MCF 10A (cell line): ENCODE measurements at regions of chr4 and their contacts with region 1.

Region 1: DNA sequence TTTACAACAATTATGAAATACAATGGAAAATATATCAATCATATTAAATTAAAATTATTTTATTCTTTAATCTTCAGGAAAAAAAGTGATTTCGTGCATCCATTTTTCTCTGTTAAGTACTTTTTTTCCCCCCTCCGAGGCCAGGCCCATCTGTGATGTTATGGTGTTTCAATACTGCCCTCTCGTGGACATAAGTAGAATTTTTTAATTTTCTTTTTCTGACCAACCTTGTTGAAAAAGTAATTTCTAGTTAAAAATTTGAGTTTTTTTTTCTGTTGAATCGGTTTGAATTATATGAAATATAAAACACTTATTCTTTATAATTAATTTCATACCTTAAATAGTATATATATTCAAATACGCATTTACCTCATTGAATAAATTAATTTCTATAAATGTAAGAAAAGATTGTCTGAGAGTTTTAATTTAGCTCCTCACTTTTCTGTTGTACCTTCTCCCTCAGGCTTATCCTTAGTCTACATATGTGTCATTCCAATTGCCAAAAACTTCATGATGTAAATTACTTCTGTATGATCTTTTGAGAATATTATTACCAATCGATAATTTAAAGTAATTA is 175.8 kb upstream of the TECRL start:
- DNase-seq: peak; percentile 55
- H3K4me3 Mint-ChIP-seq: no peak overlapping the region
- H3K27ac Mint-ChIP-seq: no peak overlapping the region
- H3K4me1 Mint-ChIP-seq: peaks cover 9% of the 10 kb centered on the region
- H3K27me3 Mint-ChIP-seq: no peaks in the 10 kb centered on the region
- CTCF ChIP-seq: peak; percentile 63

Region 2: GRCh38 chr4:63528256-63528991 is 1056.6 kb before region 1 on chr4:
- CTCF ChIA-PET with region 1: interaction called, 3 read pairs
- POLR2A ChIA-PET with region 1: no interaction called
- intact Hi-C with region 1: loop called (anchors 5 kb)
- DNase-seq: peak; percentile 20
- H3K4me3 Mint-ChIP-seq: no peak overlapping the region
- H3K27ac Mint-ChIP-seq: no peak overlapping the region
- H3K4me1 Mint-ChIP-seq: no peaks in the 10 kb centered on the region
- H3K27me3 Mint-ChIP-seq: no peaks in the 10 kb centered on the region
- CTCF ChIP-seq: peak; percentile 44

Region 3: GRCh38 chr4:64158648-64159326 is 426.3 kb before region 1 on chr4:
- CTCF ChIA-PET with region 1: no interaction called
- POLR2A ChIA-PET with region 1: no interaction called
- intact Hi-C with region 1: loop called (anchors 1 kb)
- DNase-seq: peak; percentile 82
- H3K4me3 Mint-ChIP-seq: peak overlapping the region; percentile 66
- H3K27ac Mint-ChIP-seq: peak overlapping the region; percentile 44
- H3K4me1 Mint-ChIP-seq: no peaks in the 10 kb centered on the region
- H3K27me3 Mint-ChIP-seq: no peaks in the 10 kb centered on the region
- CTCF ChIP-seq: peak; percentile 60